PC-9 (cell line): ENCODE measurements at regions of chr20 and their contacts with region 1.

Region 1: DNA sequence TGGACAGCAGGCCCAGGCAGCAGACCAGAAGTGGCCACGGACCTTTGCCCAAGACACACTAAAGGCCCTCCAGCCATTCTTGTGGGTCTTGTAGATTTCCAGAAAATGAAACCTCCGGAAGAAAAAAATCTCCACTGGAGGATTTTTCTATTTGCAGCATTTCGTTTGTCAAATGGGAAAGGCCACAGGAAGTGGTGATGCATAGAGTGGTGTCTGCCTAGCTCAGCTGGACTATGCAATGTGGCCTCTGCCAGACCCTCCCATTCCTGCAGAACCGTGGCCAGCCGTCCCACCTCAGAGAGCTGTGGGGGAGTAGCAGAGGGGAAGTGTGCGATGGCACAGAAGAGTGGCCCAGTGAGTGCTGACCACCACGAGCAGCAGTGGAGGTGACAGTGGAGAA is 24.0 kb upstream of the INSM1 start:
- DNase-seq: no peak
- H3K4me3 ChIP-seq: no peak overlapping the region
- H3K27ac ChIP-seq: no peak overlapping the region
- H3K4me1 ChIP-seq: no peaks in the 10 kb centered on the region
- H3K27me3 ChIP-seq: peaks cover 42% of the 10 kb centered on the region
- CTCF ChIP-seq: no peak

Region 2: DNA sequence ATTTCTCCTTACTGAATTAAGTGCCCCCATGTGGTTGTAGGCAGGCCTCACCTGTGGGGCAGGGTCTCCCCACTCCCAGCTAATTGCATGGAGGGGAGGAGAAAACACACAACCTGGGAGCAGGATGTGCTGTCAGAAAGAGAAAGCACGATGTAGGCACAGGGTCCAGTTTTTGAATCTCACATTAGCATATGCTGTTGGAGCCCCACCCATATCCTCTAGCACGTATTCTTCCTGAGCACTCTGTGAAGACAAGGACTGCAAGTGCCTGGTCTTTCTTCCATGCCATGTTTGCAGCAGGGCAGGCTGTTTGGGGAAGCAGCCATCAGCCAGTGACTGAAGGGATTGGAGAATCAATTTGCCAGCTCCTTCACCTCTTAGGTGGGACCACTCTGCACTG is 183.4 kb before region 1 on chr20:
- CTCF ChIA-PET with region 1: no interaction called
- POLR2A ChIA-PET with region 1: no interaction called
- intact Hi-C with region 1: no loop called
- DNase-seq: no peak
- H3K4me3 ChIP-seq: no peak overlapping the region
- H3K27ac ChIP-seq: no peak overlapping the region
- H3K4me1 ChIP-seq: no peaks in the 10 kb centered on the region
- H3K27me3 ChIP-seq: peaks cover 22% of the 10 kb centered on the region; the same call in 1 of the 2 replicates
- CTCF ChIP-seq: no peak

Region 3: DNA sequence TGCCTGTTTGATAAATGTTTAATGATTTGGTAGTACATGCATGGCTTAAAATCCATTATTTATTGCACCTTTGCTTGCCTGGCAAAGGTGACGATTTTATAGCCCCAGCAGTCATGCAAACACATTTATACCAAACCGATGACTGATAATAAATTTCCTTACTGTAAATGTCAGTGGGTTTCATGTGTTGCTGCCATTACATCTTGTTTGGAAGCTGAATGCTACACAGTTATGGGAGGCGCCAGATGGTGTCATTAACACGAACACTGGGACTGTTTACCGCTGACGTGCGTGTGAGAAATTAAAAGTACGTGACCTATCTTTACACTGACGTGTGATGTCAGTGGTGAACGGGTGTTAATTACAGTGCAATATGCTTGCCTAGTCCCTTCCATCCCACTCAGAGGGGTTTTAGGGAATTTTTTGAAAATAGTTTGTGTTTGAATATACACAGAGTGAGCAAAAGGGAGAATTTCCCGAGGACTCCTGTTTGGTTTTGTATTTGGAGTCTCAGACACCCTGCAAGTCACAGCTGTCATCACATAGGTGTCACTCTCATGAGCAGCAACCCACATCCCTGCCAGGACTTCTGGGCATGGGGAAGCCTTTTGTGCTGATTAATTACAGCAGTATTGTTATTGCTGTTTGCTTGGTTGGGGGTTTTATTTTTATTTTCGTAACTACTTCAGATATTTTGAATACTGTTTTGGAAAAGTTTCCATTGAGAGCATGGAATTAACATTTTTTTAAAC is 127.8 kb before region 1 on chr20:
- CTCF ChIA-PET with region 1: no interaction called
- POLR2A ChIA-PET with region 1: interaction called, 16 read pairs
- intact Hi-C with region 1: no loop called
- DNase-seq: no peak
- H3K4me3 ChIP-seq: no peak overlapping the region
- H3K27ac ChIP-seq: no peak overlapping the region
- H3K4me1 ChIP-seq: no peaks in the 10 kb centered on the region
- H3K27me3 ChIP-seq: peaks cover 60% of the 10 kb centered on the region
- CTCF ChIP-seq: no peak

Region 4: DNA sequence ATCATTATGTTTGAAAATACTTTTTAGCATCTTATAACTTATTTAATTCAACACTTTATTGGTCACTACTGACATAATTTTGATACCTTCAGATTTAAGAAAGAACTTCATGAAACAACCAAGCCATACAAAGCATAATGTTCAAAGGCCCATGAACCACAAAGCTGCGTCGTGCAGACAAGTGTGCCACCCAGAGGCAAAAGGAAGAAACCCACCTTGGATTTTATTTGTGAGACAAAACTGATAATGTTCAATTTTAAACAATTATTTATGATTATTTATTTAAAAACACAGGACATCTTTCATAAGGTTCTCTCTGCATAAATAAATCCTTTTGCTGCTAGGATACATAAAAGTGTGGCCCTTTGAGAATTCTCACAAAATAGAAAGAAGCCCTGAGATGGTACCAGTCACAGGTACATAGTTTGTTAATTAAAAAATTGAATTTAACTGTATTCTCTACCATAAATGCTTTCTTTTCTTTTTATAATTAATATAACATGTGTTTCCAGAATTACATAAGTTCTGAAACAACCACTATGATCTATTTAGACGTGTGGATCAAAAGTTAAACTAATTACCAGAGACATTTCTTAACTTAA is 224.8 kb after region 1 on chr20:
- CTCF ChIA-PET with region 1: interaction called, 11 read pairs
- POLR2A ChIA-PET with region 1: no interaction called
- intact Hi-C with region 1: no loop called
- DNase-seq: peak; percentile 10 to 55
- H3K4me3 ChIP-seq: no peak overlapping the region
- H3K27ac ChIP-seq: no peak overlapping the region
- H3K4me1 ChIP-seq: no peaks in the 10 kb centered on the region
- H3K27me3 ChIP-seq: no peaks in the 10 kb centered on the region
- CTCF ChIP-seq: peak; percentile 89

Region 5: DNA sequence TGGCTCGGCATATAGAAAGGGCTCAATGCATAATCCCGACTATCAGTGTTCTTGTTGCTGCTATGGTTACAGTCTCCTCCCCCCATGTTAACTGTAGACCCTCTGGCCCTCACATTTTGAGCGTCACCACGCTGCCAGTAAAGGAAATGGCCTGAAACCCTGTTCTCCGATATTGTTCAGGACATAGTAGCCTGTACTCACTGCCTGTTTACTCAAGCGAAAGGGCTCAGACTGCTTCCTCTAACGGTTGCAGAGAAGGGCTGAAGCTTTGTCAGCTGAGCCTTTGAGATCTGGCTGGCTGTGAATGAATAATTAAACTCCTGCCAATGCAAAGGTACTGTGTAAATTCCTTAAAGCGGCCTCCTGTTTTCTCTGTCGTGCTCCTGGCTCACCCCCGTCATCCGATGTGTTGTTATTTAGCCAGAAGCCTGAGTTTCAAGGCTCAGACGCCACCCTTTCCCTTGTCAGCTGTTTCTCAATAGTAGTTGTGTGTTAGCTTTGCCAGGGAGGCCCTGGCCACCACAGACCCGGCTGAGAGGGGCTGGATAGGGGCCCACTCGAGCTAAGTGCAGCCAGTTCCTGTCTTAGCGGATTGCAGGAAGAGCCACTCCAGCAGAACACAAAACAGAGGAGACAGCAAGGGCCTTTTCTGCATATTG is 399.7 kb after region 1 on chr20:
- CTCF ChIA-PET with region 1: no interaction called
- POLR2A ChIA-PET with region 1: no interaction called
- intact Hi-C with region 1: no loop called
- DNase-seq: no peak
- H3K4me3 ChIP-seq: no peak overlapping the region
- H3K27ac ChIP-seq: no peak overlapping the region
- H3K4me1 ChIP-seq: no peaks in the 10 kb centered on the region
- H3K27me3 ChIP-seq: peaks cover 78% of the 10 kb centered on the region
- CTCF ChIP-seq: no peak